OCI-LY7 (cell line): ENCODE measurements at regions of chr11 and their contacts with region 1.

Region 1: GRCh38 chr11:124800226-124800929 is at the start of gene MSANTD2:
- DNase-seq: peak; percentile 81
- H3K4me3 ChIP-seq: peak within 1 kb of the TSS; percentile 94
- H3K27ac ChIP-seq: peak within 1 kb of the TSS; percentile 83
- H3K4me1 ChIP-seq: peaks cover 37% of the 10 kb centered on the region
- CTCF ChIP-seq: peak; percentile 17; the same call in 1 of the 2 replicates
- total RNA-seq, gene MSANTD2: 17.7 and 22.1 TPM in 2 replicates

Region 2: DNA sequence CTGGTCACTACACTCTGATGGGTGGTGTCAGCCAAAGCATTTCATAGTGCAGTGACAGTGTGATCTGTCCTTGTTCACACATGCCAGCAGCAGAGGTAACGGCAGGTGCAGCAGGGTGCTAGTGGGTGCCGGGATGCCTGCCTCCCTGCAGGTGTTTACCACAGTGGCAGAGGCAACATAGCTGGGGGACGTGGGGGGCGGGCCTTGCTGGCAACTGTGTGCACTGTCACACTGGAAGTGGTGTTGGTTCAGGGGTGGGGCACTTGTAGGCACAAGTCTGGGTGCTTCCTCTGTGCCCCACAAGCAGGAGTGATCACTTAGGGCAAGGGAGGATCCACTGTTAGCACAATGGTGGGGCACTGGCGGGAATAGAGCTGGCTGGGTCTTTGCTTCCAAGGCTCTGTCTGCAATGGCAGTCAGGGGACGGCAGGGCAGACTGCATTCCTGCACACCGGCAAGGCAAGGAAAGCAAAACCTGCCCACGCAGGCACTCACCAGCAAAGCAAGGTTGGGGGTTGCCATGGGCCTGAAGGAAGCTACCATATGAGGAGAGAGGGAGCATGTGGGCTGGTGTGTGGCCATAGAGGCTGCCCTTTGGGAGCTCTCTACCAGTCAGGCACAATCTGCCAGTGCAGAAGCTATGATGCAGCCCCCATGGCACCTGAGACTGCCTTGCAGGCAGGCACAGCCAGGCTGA is 290.2 kb before region 1 on chr11:
- CTCF ChIA-PET with region 1: no interaction called
- POLR2A ChIA-PET with region 1: no interaction called
- intact Hi-C with region 1: no loop called
- DNase-seq: no peak
- H3K4me3 ChIP-seq: no peak overlapping the region
- H3K27ac ChIP-seq: no peak overlapping the region
- H3K4me1 ChIP-seq: no peaks in the 10 kb centered on the region
- CTCF ChIP-seq: no peak

Region 3: DNA sequence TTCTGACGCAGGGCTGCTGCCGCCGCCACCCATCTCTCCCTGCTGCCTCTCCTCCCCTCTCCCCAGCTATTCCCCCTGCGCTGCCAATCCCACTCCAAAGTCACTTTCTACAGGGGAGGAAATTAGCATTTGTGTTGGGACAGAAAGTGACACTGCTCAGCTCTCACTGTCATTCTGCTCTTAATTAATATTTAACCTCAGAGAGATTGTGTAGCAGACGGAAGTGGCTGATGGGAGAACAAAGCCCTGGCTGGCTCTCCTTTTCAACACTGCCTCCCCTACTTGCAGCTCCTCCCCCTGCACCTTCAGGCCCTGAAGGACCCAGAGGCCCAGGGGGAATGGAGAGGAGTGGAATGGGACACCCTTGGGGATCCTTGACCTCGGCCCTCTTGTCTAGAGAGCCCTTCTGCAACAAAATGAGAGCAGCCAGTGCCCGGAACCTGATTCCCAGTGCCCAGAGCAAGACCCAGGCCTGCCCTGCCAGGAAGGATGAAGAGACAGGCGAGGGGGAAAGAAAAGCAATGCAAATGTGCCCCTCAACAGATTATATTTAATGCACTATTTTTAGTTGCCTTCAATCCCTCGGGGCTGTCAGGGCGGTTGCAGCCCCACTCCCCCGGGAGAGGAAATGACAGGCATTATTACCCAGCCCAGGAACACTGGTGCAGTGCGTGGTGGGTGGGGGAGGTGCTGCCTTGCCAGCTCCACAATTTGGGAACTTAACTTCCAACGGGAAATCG is 75.2 kb before region 1 on chr11:
- CTCF ChIA-PET with region 1: no interaction called
- POLR2A ChIA-PET with region 1: no interaction called
- intact Hi-C with region 1: no loop called
- DNase-seq: peak; percentile 69
- H3K4me3 ChIP-seq: peak overlapping the region; percentile 48
- H3K27ac ChIP-seq: peak overlapping the region; percentile 31
- H3K4me1 ChIP-seq: peaks cover 40% of the 10 kb centered on the region
- CTCF ChIP-seq: no peak

Region 4: DNA sequence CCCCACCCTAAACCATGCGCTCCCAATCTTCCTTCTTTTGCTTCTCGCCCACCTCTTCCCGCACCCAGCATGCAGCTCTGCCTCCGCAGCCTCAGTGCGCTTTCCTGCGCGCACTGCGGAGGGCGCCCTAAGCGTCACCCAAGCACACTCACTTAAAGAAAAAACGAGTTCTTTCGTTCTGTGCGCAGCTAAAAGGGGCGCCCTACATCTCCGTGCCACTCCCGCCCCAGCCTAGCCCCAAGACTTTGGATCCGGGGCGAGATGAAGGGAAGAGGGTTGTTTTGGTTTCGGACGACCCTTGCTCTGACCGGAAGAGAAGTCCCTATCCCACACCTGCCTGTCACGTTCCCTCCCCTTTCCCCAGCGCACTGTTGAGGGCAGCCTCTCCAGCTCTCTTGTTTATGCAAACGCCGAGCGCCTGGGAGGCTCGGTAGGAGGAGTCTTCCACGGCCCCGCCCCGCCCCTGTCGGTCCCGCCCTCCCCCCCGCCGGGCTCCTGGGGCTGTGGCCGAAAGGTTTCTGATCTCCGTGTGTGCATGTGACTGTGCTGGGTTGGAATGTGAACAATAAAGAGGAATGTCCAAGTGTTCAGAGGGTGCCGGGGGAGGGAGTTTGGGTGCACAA is 53.6 kb before region 1 on chr11:
- CTCF ChIA-PET with region 1: interaction called, 3 read pairs
- POLR2A ChIA-PET with region 1: interaction called, 5 read pairs
- intact Hi-C with region 1: loop called (anchors 2 kb)
- DNase-seq: peak; percentile 90
- H3K4me3 ChIP-seq: peak overlapping the region; percentile 70
- H3K27ac ChIP-seq: peak overlapping the region; percentile 61
- H3K4me1 ChIP-seq: peaks cover 23% of the 10 kb centered on the region
- CTCF ChIP-seq: peak; percentile 84

Region 5: GRCh38 chr11:124812876-124813275 is 12.5 kb after region 1 on chr11:
- CTCF ChIA-PET with region 1: no interaction called
- POLR2A ChIA-PET with region 1: interaction called, 15 read pairs
- intact Hi-C with region 1: no loop called
- DNase-seq: no peak
- H3K4me3 ChIP-seq: no peak overlapping the region
- H3K27ac ChIP-seq: no peak overlapping the region
- H3K4me1 ChIP-seq: no peaks in the 10 kb centered on the region
- CTCF ChIP-seq: no peak

Region 6: GRCh38 chr11:125111343-125112207 is 311.2 kb after region 1 on chr11 and contains the start of gene TMEM218:
- CTCF ChIA-PET with region 1: no interaction called
- POLR2A ChIA-PET with region 1: no interaction called
- intact Hi-C with region 1: loop called (anchors 5 kb)
- DNase-seq: peak; percentile 99
- H3K4me3 ChIP-seq: peak within 1 kb of the TSS; percentile 89
- H3K27ac ChIP-seq: peak within 1 kb of the TSS; percentile 39
- H3K4me1 ChIP-seq: peaks cover 17% of the 10 kb centered on the region
- CTCF ChIP-seq: no peak
- total RNA-seq, gene TMEM218: 19.6 and 28.1 TPM in 2 replicates